Activated CD4-positive, alpha-beta memory T cell treated with anti-CD3 and anti-CD28 coated beads for 36 hours (primary cell): ENCODE measurements at regions of chr19 and their contacts with region 1.

Region 1: DNA sequence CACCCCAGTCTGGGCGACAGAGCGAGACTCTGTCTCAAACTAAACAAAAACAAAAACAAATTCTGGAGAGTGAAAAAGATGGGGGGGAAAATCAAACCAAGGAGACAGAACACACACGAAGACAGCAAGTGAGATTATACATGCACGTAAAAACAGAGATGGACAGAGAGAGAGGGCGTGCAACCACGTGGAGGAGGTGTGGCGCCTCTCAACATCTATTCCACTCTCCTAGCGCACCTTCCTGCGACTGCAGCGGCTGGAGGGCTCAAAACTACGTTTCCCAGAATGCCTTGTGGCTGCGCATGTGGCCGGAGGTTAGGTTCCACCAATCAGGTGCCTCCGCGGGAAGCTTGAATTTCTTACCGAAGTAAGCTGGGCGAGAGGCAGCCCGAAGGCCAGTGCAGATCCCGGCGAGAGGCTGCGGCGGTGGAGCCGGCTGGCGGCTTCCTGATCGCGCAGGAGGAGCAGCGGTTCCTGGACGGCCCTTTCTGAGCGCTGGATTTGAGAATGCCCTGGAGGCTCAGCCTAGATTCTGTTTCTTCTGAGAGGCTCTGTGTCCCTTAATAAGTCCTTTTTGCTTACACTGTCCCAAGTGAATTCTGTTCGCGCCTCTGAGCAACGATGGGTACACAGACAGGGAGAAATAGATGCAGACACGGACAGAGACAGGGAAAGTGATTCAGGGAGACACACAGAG is 13.1 kb upstream of the NANOS2 start:
- DNase-seq: peak; percentile 95
- H3K4me3 Mint-ChIP-seq: peak overlapping the region; percentile 69
- H3K27ac Mint-ChIP-seq: peak overlapping the region; percentile 4
- H3K4me1 Mint-ChIP-seq: peaks cover 10% of the 10 kb centered on the region
- H3K27me3 Mint-ChIP-seq: peaks cover 11% of the 10 kb centered on the region

Region 2: DNA sequence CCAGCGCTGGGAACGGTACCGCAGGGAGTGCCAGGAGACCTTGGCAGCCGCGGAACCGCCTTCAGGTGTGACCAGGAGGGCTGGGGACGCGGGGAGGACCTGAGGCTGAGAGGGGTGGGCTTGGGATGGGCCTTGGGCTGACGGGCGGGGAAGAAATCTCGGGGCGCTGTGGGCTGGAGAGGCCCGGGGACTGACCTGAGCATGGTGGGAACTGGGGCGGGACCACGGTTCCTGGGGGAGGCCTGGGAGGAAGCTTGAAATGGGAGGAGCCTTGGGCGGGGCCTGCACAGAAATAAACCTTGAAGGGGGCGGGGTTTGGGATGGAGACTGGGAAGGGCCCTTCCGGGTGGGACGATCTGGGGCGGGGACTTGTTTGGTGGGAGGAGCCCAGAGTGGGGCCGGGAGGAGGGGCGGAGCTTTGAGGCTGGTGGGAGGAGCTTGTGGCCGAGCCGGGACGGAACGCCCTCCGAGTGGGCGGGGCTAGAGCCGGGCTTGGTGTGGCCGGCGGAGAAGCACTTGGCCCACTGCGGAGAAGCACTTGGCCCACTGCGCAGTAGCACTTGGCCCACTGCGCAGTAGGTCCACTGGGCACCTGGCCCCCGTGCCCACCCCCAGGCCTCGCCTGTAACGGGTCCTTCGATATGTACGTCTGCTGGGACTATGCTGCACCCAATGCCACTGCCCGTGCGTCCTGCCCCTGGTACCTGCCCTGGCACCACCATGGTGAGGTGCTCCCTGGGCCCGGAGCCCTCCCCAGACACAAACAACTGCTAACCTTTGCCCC is 256.9 kb before region 1 on chr19:
- CTCF ChIA-PET with region 1: no interaction called
- POLR2A ChIA-PET with region 1: no interaction called
- intact Hi-C with region 1: no loop called
- DNase-seq: peak; percentile 83
- H3K4me3 Mint-ChIP-seq: peak overlapping the region; percentile 57
- H3K27ac Mint-ChIP-seq: no peak overlapping the region
- H3K4me1 Mint-ChIP-seq: peaks cover 33% of the 10 kb centered on the region
- H3K27me3 Mint-ChIP-seq: peaks cover 17% of the 10 kb centered on the region

Region 3: DNA sequence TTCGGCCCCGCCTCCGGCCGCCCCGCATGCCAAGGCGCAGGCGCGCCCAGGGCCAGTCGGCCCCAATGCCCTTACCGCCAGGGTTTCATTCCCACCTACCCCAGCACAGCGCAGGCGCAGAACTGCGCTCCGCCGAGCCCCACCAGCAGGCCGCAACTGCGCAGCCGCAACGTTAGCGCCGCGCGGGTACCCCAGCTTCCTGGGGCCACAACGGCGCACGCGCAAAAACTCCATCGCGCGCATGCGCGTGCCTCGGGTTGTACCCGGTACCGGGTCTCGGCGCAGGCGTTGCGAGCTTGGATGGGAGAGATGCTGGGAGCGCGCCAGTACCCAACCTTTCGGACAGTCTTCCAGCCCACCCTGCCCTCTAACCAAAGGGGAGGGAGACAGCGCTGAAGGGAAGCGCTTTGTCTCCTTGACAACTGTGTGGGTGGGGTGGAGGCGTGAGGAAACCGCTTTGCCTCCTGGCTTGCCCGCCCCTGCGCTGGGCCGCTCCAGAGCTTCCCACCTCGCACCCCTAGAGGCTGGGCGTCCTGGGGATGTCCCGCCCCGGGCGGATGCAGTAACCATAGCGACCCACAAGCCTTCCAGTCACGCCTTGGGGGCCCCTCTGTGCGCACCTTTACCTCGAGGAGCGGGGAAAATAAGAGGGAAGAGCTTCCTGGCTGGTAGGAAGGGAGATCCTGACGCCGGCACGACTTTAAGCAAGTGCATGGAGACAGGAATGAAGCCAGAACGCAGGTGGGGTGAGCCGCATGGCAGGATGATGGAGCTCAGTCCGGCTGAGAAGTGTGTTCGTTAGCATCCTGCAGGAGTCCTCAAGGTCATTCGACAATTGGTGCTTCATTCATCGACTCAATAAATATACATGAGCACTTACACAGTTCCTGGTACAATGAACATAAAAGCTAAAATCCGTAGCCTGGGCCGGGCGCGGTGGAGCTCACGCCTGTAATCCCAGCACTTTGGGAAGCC is 24.8 kb before region 1 on chr19:
- CTCF ChIA-PET with region 1: interaction called, 7 read pairs
- POLR2A ChIA-PET with region 1: no interaction called
- intact Hi-C with region 1: loop called (anchors 2 kb)
- DNase-seq: peak; percentile 100
- H3K4me3 Mint-ChIP-seq: peak overlapping the region; percentile 93
- H3K27ac Mint-ChIP-seq: peak overlapping the region; percentile 80
- H3K4me1 Mint-ChIP-seq: peaks cover 7% of the 10 kb centered on the region
- H3K27me3 Mint-ChIP-seq: no peaks in the 10 kb centered on the region

Region 4: DNA sequence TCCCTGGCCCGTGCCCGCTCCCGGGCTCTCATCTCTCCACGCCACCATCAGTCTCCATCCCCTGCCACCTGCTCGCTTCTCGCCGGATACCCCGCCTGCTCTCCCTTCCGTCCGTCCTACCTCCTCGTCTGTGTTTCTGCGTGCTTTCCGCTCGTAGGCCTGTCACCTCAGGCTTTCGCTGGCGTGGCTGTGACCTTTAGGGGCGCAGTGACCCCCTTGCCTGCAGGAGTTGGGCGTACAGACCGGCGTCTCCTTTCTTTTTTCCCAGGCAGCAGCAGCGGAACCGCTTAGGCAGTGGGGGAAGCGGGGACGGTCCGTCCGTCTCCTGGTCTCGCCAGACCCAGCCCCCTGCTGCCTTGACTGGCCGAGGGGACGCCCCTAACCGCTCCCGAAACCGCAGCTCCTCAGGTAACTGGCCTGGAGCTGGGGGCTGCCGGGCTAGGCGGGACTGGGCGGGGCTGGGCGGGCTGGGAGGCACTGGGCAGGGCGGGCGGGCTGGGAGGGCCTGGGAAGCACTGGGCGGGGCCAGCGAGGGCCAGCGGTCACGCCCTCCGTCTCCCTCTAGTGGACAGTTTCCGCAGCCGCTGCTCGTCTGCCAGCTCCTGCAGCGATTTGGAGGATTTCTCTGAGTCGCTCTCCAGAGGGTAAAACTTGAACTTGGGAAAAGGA is 88.8 kb after region 1 on chr19:
- CTCF ChIA-PET with region 1: no interaction called
- POLR2A ChIA-PET with region 1: no interaction called
- intact Hi-C with region 1: loop called (anchors 1 kb)
- DNase-seq: peak; percentile 88
- H3K4me3 Mint-ChIP-seq: peak overlapping the region; percentile 74
- H3K27ac Mint-ChIP-seq: no peak overlapping the region
- H3K4me1 Mint-ChIP-seq: peaks cover 17% of the 10 kb centered on the region
- H3K27me3 Mint-ChIP-seq: peaks cover 13% of the 10 kb centered on the region